Activated CD8-positive, alpha-beta memory T cell treated with anti-CD3 and anti-CD28 coated beads, Interleukin-2, amount 10 ng/mL, durations not matched to agents 7 days and 5 days (primary cell): ENCODE measurements at regions of chr10 and their contacts with region 1.

Region 1: DNA sequence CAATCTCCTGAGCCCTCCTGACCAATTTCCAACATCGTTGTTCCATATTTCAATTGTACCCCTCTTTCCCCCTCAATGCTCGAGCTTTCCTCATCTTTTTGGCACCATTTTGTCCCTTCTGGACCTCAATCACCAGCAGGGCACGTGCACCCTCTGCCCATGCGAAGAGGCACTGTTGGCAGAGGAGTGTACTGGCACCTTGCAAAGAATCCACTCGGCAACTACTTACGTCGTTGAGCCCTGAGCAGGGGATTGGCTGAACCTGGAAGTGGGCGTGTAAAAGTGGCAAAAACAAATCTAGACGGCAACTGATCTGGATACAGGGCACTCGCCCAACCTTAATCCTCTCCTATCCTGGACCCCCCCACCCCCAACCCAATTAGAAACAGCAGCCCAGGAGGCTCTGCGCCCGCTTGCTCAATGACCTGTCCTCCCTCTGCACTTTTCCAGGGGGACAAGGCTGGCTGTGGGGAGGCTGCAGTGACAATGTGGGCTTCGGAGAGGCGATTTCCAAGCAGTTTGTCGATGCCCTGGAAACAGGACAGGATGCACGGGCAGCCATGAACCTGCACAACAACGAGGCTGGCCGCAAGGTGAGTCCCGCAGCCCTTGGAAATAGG is 18.8 kb downstream of the WNT8B start:
- DNase-seq: peak; percentile 94
- ATAC-seq: peak; percentile 94
- H3K4me3 Mint-ChIP-seq: peak overlapping the region; percentile 74
- H3K27ac Mint-ChIP-seq: no peak overlapping the region
- H3K4me1 Mint-ChIP-seq: peaks cover 22% of the 10 kb centered on the region
- H3K27me3 Mint-ChIP-seq: peaks cover 29% of the 10 kb centered on the region

Region 2: DNA sequence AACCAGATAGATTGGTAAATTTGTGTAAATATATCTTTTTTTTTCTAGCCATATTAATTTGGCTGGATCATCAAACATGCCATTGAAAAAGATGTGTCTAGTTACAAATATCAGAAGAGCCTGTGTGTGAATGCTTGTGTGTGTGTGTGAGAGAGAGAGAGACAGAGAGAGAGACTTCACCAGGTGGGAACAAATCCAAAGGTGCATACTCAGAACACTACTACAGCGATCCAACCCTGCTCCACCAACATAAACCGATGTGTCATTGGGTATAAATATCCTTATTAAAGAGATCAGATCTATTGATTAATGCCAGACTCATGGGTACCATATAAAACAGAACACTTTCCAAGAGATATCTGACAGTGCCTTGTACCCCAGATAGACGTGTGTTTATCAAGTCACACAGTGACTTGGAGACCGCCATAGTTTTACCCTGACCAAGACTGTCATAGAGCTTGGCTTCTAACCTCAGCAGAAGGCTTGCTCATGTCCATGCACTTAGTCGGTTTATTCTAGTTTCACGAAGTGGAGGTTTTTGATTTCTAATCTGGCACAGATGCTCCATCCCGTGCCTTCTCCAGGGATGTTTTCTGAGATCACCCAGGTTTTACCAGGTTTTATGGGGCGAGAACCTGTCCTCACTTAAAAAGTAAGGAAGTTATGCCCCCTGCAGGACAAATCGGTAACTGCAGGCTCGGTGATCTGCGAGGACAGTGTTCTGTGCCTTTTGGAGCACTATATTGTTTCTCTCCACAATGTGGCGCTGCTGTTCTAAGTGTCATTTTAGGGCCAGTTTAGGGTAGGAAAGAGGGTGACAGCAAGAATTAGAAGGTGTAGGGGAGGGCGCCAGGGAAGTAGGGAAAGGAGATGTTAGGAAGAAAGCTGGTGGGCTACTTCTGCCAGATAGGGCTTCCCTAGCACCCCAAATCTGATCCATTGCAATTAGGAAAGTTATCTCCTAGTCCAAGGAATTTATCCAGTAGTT is 48.0 kb before region 1 on chr10:
- CTCF ChIA-PET with region 1: interaction called, 28 read pairs
- DNase-seq: peak; percentile 97
- ATAC-seq: peak; percentile 99
- H3K4me3 Mint-ChIP-seq: no peak overlapping the region
- H3K27ac Mint-ChIP-seq: no peak overlapping the region
- H3K4me1 Mint-ChIP-seq: peaks cover 11% of the 10 kb centered on the region
- H3K27me3 Mint-ChIP-seq: no peaks in the 10 kb centered on the region

Region 3: DNA sequence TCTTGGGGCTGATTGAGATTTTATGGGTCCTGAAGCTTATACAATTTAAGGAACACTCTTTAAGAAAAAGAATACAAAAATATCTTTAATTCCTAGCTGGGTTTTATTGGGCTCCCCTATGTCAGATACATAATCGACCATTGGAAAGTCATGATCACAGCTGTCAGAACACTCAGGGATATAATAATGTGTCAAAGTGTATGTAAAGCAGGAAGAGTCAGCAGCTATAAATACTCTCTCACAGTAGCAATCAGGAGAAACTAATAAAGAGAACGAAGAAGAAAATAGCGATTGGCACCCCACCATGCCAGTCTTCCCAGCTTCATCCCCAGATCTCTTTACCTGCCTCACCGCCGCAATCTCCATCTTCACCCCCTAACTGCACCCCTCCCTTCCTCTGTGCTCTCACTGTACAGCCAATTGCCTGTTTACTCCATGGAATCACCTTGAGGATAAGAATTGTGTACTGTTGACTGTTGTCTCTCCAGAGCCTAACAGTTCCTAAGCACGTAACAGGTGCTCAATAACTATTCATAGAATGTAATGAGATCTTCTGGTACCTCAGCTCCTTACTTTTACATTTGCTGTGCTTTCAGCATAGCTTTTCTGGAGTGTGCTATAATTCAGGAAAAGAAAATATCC is 42.8 kb before region 1 on chr10:
- CTCF ChIA-PET with region 1: interaction called, 28 read pairs
- DNase-seq: no peak
- ATAC-seq: no peak
- H3K4me3 Mint-ChIP-seq: no peak overlapping the region
- H3K27ac Mint-ChIP-seq: no peak overlapping the region
- H3K4me1 Mint-ChIP-seq: peaks cover 4% of the 10 kb centered on the region
- H3K27me3 Mint-ChIP-seq: peaks cover 3% of the 10 kb centered on the region

Region 4: GRCh38 chr10:100446130-100446761 is 35.3 kb before region 1 on chr10:
- CTCF ChIA-PET with region 1: interaction called, 10 read pairs
- DNase-seq: no peak
- ATAC-seq: no peak
- H3K4me3 Mint-ChIP-seq: no peak overlapping the region
- H3K27ac Mint-ChIP-seq: no peak overlapping the region
- H3K4me1 Mint-ChIP-seq: no peaks in the 10 kb centered on the region
- H3K27me3 Mint-ChIP-seq: peaks cover 24% of the 10 kb centered on the region

Region 5: DNA sequence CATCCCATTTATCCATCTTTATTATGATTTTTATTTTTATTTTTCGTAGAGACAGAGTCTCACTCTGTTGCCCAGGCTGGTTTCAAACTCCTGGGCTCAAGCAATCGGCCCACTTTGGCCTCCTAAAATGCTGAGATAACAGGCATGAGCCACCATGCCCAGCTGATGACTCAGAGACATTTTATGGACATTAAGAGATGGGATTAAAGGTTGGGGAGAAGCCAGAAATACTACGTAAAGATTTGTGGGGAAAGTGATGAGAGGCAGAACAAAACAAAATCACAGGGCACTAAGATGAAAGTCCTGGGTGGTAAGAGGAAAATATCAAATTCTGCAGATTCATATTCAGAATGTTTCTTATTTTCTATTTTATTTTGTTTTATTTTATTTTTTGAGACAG is 11.2 kb before region 1 on chr10:
- CTCF ChIA-PET with region 1: interaction called, 10 read pairs
- DNase-seq: no peak
- ATAC-seq: no peak
- H3K4me3 Mint-ChIP-seq: no peak overlapping the region
- H3K27ac Mint-ChIP-seq: no peak overlapping the region
- H3K4me1 Mint-ChIP-seq: no peaks in the 10 kb centered on the region
- H3K27me3 Mint-ChIP-seq: peaks cover 14% of the 10 kb centered on the region

Region 6: DNA sequence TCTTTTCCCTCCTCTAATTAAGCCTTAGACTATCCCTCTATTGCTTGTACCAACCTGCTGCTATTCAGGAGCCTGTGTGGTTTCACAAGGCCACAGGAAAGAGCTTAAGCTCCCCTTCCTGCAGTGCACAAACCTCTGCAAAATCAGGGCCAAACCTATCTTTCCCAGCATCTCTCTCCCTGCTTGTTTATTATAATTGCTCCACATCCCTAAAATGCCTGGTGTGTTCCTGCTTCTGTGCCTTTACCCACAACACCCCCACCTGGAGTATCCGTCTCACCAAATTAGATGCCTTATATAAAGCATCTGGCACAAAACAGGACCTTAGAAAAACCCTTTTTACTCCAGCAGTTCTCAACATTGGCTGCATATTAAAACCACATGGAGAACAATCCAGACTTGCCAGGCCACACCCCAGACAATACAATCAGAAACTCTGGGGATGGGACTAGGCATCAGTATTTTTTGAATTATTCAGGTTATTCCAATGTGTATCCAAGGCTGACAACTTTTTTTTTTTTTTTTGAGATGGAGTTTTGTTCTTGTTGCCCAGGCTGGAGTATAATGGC is 21.4 kb after region 1 on chr10:
- CTCF ChIA-PET with region 1: interaction called, 363 read pairs
- DNase-seq: no peak
- ATAC-seq: no peak
- H3K4me3 Mint-ChIP-seq: no peak overlapping the region
- H3K27ac Mint-ChIP-seq: peak overlapping the region; percentile 9
- H3K4me1 Mint-ChIP-seq: peaks cover 81% of the 10 kb centered on the region
- H3K27me3 Mint-ChIP-seq: no peaks in the 10 kb centered on the region

Region 7: DNA sequence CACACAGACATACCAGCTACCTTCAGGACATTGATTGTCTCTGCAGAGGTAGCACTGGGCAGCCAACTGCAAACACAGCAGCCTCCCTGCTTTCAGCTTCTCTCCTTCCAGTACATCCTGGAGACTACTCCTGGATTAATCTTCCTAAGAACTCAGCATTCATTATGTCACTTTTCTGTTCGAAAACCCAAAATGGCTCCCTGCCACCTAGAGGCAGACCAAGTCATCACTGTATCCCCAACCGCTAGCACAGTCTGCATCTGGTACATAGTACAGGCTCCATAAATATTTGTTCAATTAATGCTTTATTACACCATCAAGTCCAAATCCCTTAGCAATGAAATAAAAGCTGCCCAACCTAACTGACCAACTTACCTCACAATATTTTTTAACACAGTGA is 43.1 kb after region 1 on chr10:
- CTCF ChIA-PET with region 1: interaction called, 363 read pairs
- DNase-seq: no peak
- ATAC-seq: no peak
- H3K4me3 Mint-ChIP-seq: no peak overlapping the region
- H3K27ac Mint-ChIP-seq: peak overlapping the region; percentile 28
- H3K4me1 Mint-ChIP-seq: peaks cover 28% of the 10 kb centered on the region
- H3K27me3 Mint-ChIP-seq: no peaks in the 10 kb centered on the region